Activated naive CD4-positive, alpha-beta T cell treated with anti-CD3 and anti-CD28 coated beads for 36 hours (primary cell): ENCODE measurements at regions of chr4 and their contacts with region 1.

Region 1: GRCh38 chr4:142379277-142380057 is 466.6 kb downstream of the INPP4B start:
- DNase-seq: no peak
- H3K4me3 Mint-ChIP-seq: no peak overlapping the region
- H3K27ac Mint-ChIP-seq: peak overlapping the region; percentile 75
- H3K4me1 Mint-ChIP-seq: peaks cover 72% of the 10 kb centered on the region
- H3K27me3 Mint-ChIP-seq: no peaks in the 10 kb centered on the region

Region 2: GRCh38 chr4:141810038-141810711 is 569.3 kb before region 1 on chr4:
- CTCF ChIA-PET with region 1: no interaction called
- intact Hi-C with region 1: no loop called
- DNase-seq: no peak
- H3K4me3 Mint-ChIP-seq: no peak overlapping the region
- H3K27ac Mint-ChIP-seq: no peak overlapping the region
- H3K4me1 Mint-ChIP-seq: no peaks in the 10 kb centered on the region
- H3K27me3 Mint-ChIP-seq: peaks cover 2% of the 10 kb centered on the region

Region 3: GRCh38 chr4:142194905-142195304 is 184.6 kb before region 1 on chr4:
- CTCF ChIA-PET with region 1: no interaction called
- intact Hi-C with region 1: no loop called
- DNase-seq: no peak
- H3K4me3 Mint-ChIP-seq: no peak overlapping the region
- H3K27ac Mint-ChIP-seq: no peak overlapping the region
- H3K4me1 Mint-ChIP-seq: peaks cover 2% of the 10 kb centered on the region
- H3K27me3 Mint-ChIP-seq: no peaks in the 10 kb centered on the region

Region 4: DNA sequence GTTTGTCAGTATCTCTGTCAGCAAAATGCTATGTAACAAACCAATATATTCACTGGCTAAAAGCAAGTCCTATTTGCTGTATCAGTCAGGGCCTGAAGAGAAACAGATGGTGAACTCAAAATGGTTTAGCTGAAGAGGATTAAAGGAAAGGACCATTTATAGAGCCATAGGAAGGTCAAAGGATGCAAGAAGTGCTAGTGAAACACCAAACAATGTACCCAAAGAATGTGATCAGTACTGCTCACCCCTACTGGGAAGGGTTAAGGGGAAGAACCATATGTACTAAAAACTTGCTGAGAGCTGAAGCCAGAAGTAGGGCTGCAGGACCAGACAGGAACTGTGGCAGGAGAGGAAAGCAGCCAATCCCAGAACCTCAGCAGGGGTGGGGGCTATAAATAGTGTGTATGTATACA is 12.7 kb before region 1 on chr4:
- CTCF ChIA-PET with region 1: interaction called, 3 read pairs
- intact Hi-C with region 1: loop called (anchors 1 kb)
- DNase-seq: peak; percentile 48
- H3K4me3 Mint-ChIP-seq: peak overlapping the region; percentile 28
- H3K27ac Mint-ChIP-seq: peak overlapping the region; percentile 85
- H3K4me1 Mint-ChIP-seq: peaks cover 77% of the 10 kb centered on the region
- H3K27me3 Mint-ChIP-seq: no peaks in the 10 kb centered on the region

Region 5: DNA sequence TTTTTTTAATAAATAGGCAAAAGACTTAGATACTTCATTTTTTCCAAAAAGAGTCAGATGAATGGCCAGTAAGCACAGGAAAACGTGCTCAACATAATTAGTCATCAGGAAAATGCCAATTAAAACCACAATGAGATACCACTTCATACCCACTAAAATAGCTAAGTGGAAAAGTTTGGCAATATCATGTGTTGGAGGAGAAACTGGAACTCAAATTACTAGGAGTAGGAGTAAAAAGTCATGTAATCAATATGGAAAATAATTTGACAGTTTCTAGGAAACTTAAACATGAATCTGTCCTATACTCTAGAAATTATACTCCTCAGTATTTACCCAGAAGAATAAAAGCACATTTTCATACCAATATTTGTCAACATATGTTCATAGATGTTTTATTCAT is 16.8 kb after region 1 on chr4:
- CTCF ChIA-PET with region 1: interaction called, 4 read pairs
- intact Hi-C with region 1: loop called (anchors 1 kb)
- DNase-seq: no peak
- H3K4me3 Mint-ChIP-seq: peak overlapping the region; percentile 51
- H3K27ac Mint-ChIP-seq: peak overlapping the region; percentile 82
- H3K4me1 Mint-ChIP-seq: peaks cover 83% of the 10 kb centered on the region
- H3K27me3 Mint-ChIP-seq: no peaks in the 10 kb centered on the region